CD8-positive, alpha-beta memory T cell (primary cell): ENCODE measurements at regions of chr15 and their contacts with region 1.

Region 1: DNA sequence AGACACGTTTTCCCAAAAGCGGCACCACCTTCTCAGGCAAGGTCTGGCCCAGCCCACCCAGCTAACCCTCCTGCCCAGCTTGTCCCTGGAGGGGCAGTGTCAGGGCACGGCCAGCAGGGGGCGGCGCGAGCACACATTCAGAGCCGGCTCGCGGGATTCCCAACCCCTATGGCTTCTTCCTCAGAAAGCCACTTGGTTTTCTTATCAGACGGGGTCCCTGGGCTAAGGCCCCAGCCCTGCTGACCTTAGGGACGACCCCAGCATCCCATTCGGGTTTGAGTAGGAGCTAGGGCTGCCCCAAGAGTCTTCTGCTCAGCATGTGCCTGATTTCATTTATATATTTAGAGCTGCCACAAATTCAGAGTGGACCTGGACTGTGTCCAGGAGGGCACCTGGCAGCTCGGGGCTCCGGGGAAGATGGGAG is 14.5 kb downstream of the RLBP1 start:
- DNase-seq: peak; percentile 47 to 76 (median 57)
- H3K4me3 ChIP-seq: no peak overlapping the region
- H3K4me3 Mint-ChIP-seq: peak overlapping the region in 3 of 7 donors; percentile 1 to 28 (median 10)
- H3K27ac ChIP-seq: no peak overlapping the region
- H3K27ac Mint-ChIP-seq: peak overlapping the region in 2 of 8 donors; percentile 47 to 52
- H3K4me1 ChIP-seq: no peaks in the 10 kb centered on the region
- H3K4me1 Mint-ChIP-seq: peaks cover 30 to 36% (median 35%) of the 10 kb centered on the region in 3 donors
- H3K27me3 ChIP-seq: no peaks in the 10 kb centered on the region
- H3K27me3 Mint-ChIP-seq: peaks cover 0 to 4% of the 10 kb centered on the region in 2 donors

Region 2: GRCh38 chr15:88810434-88810995 is 396.4 kb before region 1 on chr15:
- CTCF ChIA-PET with region 1: no interaction called
- POLR2A ChIA-PET with region 1: no interaction called
- DNase-seq: no peak
- H3K4me3 ChIP-seq: no peak overlapping the region
- H3K4me3 Mint-ChIP-seq: no peak overlapping the region
- H3K27ac ChIP-seq: no peak overlapping the region
- H3K27ac Mint-ChIP-seq: peak overlapping the region in 1 of 8 donors; percentile 87
- H3K4me1 ChIP-seq: no peaks in the 10 kb centered on the region
- H3K4me1 Mint-ChIP-seq: no peaks in the 10 kb centered on the region
- H3K27me3 ChIP-seq: peaks cover 7% of the 10 kb centered on the region
- H3K27me3 Mint-ChIP-seq: peaks cover 27 to 75% of the 10 kb centered on the region in 2 donors

Region 3: GRCh38 chr15:88874684-88875083 is 332.2 kb before region 1 on chr15:
- CTCF ChIA-PET with region 1: no interaction called
- POLR2A ChIA-PET with region 1: no interaction called
- DNase-seq: no peak
- H3K4me3 ChIP-seq: no peak overlapping the region
- H3K4me3 Mint-ChIP-seq: no peak overlapping the region
- H3K27ac ChIP-seq: no peak overlapping the region
- H3K27ac Mint-ChIP-seq: peak overlapping the region in 1 of 8 donors; percentile 22
- H3K4me1 ChIP-seq: no peaks in the 10 kb centered on the region
- H3K4me1 Mint-ChIP-seq: no peaks in the 10 kb centered on the region
- H3K27me3 ChIP-seq: no peaks in the 10 kb centered on the region
- H3K27me3 Mint-ChIP-seq: peaks cover 0 to 2% of the 10 kb centered on the region in 2 donors

Region 4: DNA sequence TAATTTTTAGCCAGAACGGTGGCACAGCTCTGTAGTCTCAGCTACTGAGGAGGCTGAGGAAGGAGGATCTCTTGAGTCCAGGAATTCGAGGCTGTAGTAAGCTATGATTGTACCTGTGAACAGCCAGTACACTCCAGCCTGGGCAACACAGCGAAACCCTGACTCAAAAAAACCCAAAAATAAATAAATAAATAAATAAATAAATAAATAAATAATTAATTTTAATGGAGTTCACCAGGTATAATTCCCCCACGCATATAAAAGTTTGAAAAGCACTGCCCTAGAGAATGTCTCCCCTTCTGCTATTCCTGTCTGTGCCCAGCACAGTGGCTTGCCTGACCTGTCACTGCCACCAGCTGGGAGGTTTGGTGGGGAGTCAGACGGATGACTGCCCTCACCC is 18.7 kb after region 1 on chr15:
- CTCF ChIA-PET with region 1: interaction called, 18 read pairs
- POLR2A ChIA-PET with region 1: no interaction called
- DNase-seq: no peak
- H3K4me3 ChIP-seq: no peak overlapping the region
- H3K4me3 Mint-ChIP-seq: no peak overlapping the region
- H3K27ac ChIP-seq: no peak overlapping the region
- H3K27ac Mint-ChIP-seq: no peak overlapping the region
- H3K4me1 ChIP-seq: no peaks in the 10 kb centered on the region
- H3K4me1 Mint-ChIP-seq: no peaks in the 10 kb centered on the region
- H3K27me3 ChIP-seq: no peaks in the 10 kb centered on the region
- H3K27me3 Mint-ChIP-seq: peaks cover 8 to 14% of the 10 kb centered on the region in 2 donors

Region 5: GRCh38 chr15:89430530-89431341 is 223.8 kb after region 1 on chr15:
- CTCF ChIA-PET with region 1: interaction called, 15 read pairs
- POLR2A ChIA-PET with region 1: no interaction called
- DNase-seq: peak; percentile 68 to 85 (median 77)
- H3K4me3 ChIP-seq: peak overlapping the region; percentile 50
- H3K4me3 Mint-ChIP-seq: peak overlapping the region in 6 of 7 donors; percentile 72 to 89 (median 78)
- H3K27ac ChIP-seq: no peak overlapping the region
- H3K27ac Mint-ChIP-seq: no peak overlapping the region
- H3K4me1 ChIP-seq: no peaks in the 10 kb centered on the region
- H3K4me1 Mint-ChIP-seq: peaks cover 6 to 8% (median 6%) of the 10 kb centered on the region in 3 donors
- H3K27me3 ChIP-seq: no peaks in the 10 kb centered on the region
- H3K27me3 Mint-ChIP-seq: peaks cover 26 to 43% of the 10 kb centered on the region in 2 donors